ENCODE measurements at regions of chr12 and their contacts with region 1.

Region 1: DNA sequence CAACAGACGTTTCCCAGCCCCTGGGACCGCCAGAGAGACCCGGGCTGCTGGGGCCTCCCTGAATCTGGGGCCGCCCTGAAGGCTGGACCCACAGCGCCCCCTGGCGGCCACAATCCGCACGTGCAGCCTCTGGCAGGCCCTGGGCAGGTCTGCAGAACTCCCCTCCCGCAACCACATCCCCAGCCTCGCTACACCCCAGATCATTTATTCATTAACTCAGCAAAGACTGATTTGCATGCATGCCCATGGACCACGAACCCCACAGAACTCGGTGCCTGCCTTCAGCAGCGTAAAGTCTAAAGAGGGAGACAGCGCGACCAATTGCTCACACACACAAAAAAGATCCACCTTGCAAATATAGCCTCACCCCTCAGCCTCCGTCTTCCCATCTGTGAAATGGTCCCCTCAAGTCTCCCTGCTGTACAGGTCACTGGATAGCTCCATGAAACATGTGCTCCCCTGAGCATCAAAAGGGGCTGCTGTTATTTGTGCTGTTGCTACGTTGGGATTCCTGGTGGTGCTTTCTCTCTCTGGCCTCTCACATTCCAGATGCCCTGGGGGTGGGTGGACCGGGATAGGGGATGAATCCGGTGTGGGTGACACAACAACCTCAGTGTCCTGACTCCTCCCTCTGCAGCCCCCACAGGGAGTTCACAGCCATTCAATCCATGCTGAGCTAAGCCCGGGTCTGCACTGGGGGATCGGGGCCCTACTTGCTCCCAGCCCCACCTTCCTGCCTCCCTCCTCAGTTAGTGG is 96.4 kb downstream of the SCARB1 start:
- DNase-seq: no peak
- H3K4me3 ChIP-seq: no peak overlapping the region
- H3K27ac ChIP-seq: no peak overlapping the region
- H3K27me3 ChIP-seq: no peaks in the 10 kb centered on the region
- CTCF ChIP-seq: peak; percentile 97

Region 2: GRCh38 chr12:124379938-124380754 is 387.1 kb before region 1 on chr12:
- CTCF ChIA-PET with region 1: interaction called, 28 read pairs
- POLR2A ChIA-PET with region 1: interaction called, 3 read pairs
- DNase-seq: peak; percentile 58
- H3K4me3 ChIP-seq: no peak overlapping the region
- H3K27ac ChIP-seq: peak overlapping the region; percentile 95
- H3K27me3 ChIP-seq: no peaks in the 10 kb centered on the region
- CTCF ChIP-seq: peak; percentile 77

Region 3: DNA sequence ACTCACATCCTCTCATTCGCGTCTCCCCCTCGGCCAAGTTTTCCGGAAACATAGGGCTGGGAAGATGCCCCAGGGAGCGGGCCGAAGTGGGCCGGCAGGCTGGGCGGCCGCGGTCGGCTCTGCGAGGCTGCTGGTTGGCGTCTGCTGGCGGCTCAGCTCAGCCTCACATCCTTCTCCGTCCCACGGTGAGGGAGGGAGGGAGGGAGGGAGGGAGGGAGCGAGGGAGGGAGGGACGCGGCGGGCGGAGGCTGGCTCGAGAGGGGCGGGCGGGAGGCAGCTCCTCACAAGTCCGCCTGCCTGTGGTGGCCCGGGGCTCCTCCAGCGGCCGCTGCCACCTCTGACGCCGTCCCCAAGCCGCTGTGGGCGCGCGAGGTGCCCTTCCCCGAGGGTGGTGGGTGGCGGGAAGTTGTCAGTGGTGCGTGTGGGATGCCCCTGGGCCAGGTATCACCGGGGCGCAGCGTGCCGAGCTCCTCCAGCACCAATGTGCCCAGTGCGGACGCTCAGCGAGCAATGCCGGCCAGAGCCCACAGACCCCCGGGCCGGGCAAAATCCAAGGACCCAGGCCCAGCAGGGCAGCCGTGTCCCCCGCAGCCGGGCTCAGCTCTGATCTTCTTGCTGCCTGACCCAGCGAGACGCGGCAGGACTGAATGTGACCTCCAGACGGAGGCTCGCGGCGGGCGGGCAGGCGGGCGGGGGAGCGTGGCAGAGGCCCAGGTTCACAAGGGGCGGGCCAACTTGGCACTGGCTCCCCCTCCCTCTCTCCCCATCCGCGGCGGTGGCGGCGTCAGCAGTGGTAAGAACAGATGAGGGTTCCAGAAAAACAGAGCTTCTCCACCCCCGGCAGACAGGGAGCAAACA is 378.3 kb before region 1 on chr12:
- CTCF ChIA-PET with region 1: interaction called, 18 read pairs
- POLR2A ChIA-PET with region 1: interaction called, 3 read pairs
- DNase-seq: peak; percentile 63
- H3K4me3 ChIP-seq: peak overlapping the region; percentile 85
- H3K27ac ChIP-seq: peak overlapping the region; percentile 82
- H3K27me3 ChIP-seq: no peaks in the 10 kb centered on the region
- CTCF ChIP-seq: no peak

Region 4: DNA sequence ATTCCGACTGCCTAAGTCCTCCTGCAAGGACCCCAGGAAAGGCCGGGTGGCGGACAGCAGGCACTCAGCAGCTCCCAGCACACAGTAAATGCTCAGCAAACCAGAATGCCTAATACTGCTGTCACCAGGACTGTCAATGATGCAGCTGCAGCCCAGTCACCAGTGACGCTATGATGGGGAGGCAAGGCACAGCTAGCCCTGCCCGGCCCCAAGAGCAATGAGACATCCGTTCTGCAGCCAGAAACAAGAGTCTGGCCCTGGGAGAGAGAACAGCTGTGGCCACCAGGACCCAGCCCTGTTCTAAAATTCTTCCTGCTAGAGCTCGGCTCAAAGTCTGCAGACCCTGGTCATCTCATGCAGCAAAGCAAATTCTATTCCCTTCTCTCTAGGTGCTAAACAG is 269.6 kb before region 1 on chr12:
- CTCF ChIA-PET with region 1: interaction called, 10 read pairs
- POLR2A ChIA-PET with region 1: interaction called, 6 read pairs
- DNase-seq: peak; percentile 69
- H3K4me3 ChIP-seq: no peak overlapping the region
- H3K27ac ChIP-seq: peak overlapping the region; percentile 92
- H3K27me3 ChIP-seq: no peaks in the 10 kb centered on the region
- CTCF ChIP-seq: no peak

Region 5: DNA sequence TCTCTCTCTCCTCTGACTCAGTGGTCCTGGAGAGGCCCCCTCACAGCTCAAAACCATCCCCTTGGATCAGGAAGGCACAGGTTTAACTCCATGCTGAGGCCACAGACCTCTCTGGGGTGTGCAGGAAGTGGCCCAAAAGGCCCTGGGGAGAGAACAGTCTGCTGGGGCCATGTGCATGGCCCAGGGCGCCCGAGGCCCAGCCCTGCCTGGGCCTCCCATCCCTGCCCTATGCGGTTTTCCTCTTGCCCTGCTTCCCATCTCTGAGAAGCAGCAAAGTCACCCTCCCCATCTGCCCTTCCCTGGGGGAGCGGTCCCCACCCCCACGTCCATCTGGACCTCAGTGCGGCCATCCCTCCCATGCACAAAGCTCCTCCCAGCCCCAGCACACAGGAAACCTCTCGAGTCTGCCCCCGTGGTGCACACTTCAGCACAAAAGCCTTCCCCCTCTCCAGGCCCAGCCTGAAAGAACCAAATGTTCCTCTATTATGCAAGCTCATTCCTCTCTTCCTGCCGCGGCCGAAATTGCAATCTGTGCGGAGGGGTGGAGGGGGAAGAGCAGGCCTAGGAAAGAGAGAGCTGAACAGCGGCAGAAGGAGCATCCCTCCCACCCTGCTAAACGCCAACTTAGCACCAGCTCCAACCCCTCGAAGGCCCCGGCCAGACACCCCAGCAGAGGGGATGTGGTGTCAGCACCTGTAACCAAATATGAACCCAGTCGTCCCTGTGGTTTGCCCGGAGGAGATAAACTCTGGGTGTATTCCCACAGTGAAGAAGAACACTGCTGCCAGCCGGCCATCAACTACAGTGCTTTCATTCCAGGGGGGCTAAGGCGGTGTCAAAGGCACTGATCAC is 12.1 kb before region 1 on chr12:
- CTCF ChIA-PET with region 1: interaction called, 20 read pairs
- POLR2A ChIA-PET with region 1: interaction called, 8 read pairs
- DNase-seq: no peak
- H3K4me3 ChIP-seq: no peak overlapping the region
- H3K27ac ChIP-seq: peak overlapping the region; percentile 73
- H3K27me3 ChIP-seq: peaks cover 16% of the 10 kb centered on the region
- CTCF ChIP-seq: no peak

Measured in AG04450 (cell line).